OCI-LY7 (cell line): ENCODE measurements at regions of chr15 and their contacts with region 1.

Region 1: DNA sequence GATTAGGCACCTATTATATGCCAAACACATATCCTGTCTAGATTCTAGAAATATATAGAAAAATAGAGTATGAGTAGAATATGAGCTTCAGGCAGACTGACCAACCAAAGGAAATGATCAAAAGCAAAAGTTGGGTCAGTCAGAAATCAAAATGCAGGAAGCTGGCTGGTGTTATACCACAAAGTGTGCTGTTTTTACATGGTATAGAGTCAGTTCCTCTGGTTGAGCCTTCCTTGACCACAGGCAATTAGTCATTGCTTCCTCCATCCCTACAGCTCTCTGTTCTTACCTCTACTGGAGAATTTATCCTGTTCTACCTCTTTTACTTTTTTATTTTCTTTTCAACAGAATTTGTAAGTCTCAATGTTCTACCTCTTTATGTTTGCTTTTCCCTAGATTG is 149.8 kb downstream of the TMCO5A start:
- DNase-seq: peak; percentile 51
- H3K4me3 ChIP-seq: peak overlapping the region; percentile 32
- H3K27ac ChIP-seq: peak overlapping the region; percentile 8
- H3K4me1 ChIP-seq: peaks cover 50% of the 10 kb centered on the region
- CTCF ChIP-seq: no peak

Region 2: GRCh38 chr15:38129531-38130204 is 45.4 kb after region 1 on chr15:
- CTCF ChIA-PET with region 1: no interaction called
- POLR2A ChIA-PET with region 1: interaction called, 12 read pairs
- intact Hi-C with region 1: no loop called
- DNase-seq: peak; percentile 66
- H3K4me3 ChIP-seq: peak overlapping the region; percentile 26
- H3K27ac ChIP-seq: peak overlapping the region; percentile 1
- H3K4me1 ChIP-seq: peaks cover 46% of the 10 kb centered on the region
- CTCF ChIP-seq: no peak